ENCODE measurements at regions of chr12 and their contacts with region 1.

Region 1: DNA sequence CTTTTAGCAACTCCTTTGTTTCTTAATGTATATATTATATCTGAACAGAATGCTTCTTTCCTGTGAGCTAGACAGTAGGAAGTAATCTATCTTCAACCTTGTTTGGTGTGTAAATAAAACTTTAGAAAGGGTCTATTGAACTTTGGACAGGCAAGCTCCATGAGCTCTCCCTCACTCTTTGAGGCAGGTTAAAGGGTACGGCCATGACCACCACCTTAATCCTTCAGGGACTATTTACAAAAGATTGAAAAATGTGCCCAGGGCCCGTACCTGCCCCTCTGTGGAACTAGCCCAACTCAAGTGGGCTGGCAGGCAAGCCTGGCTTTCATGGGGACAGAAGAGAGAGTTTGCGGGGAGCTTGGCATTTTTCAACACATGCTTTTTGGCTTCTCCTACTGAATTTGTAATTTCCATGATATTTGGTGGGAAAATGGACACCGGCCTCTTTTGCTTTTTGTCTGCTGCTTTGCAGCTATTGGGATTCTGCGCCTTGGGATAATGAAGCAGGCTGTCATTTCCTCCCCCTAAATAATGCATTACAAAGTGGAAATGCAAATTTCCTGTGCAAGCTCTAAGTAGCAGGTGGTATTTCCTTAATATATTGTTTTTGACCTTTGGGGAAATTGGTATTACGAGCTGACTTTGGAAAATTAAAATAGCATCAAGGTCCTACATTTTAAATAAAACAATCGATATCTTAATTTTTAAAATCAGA is 106.0 kb downstream of the HMGA2 start:
- DNase-seq: no peak
- ATAC-seq: no peak
- H3K4me3 ChIP-seq: no peak overlapping the region
- H3K27ac ChIP-seq: no peak overlapping the region
- H3K4me1 ChIP-seq: peaks cover 9% of the 10 kb centered on the region; the same call in 1 of the 2 replicates
- H3K27me3 ChIP-seq: no peaks in the 10 kb centered on the region
- CTCF ChIP-seq: no peak
- EP300 ChIP-seq: no peak
- POLR2A ChIP-seq: no peak
- RAD21 ChIP-seq: no peak

Region 2: GRCh38 chr12:65756956-65757511 is 173.2 kb before region 1 on chr12:
- CTCF ChIA-PET with region 1: no interaction called
- POLR2A ChIA-PET with region 1: no interaction called
- RAD21 ChIA-PET with region 1: no interaction called
- SMC1A ChIA-PET with region 1: no interaction called
- in situ Hi-C with region 1: no loop called
- intact Hi-C with region 1: no loop called
- DNase-seq: peak; percentile 87
- ATAC-seq: peak; percentile 95
- H3K4me3 ChIP-seq: no peak overlapping the region
- H3K27ac ChIP-seq: peak overlapping the region; percentile 62
- H3K4me1 ChIP-seq: peaks cover 24% of the 10 kb centered on the region
- H3K27me3 ChIP-seq: no peaks in the 10 kb centered on the region; a peak in 1 of 4 replicates
- CTCF ChIP-seq: no peak
- EP300 ChIP-seq: peak; percentile 55 to 70; a peak in 3 of 4 replicates
- POLR2A ChIP-seq: no peak
- RAD21 ChIP-seq: 0 out of 2 replicates have a peak, but pooled peaks have one; percentile 21

Region 3: GRCh38 chr12:65918021-65918420 is 12.2 kb before region 1 on chr12:
- CTCF ChIA-PET with region 1: interaction called, 3 read pairs
- POLR2A ChIA-PET with region 1: no interaction called
- RAD21 ChIA-PET with region 1: interaction called, 4 read pairs
- SMC1A ChIA-PET with region 1: interaction called, 10 read pairs
- in situ Hi-C with region 1: no loop called
- intact Hi-C with region 1: no loop called
- DNase-seq: no peak
- ATAC-seq: peak; percentile 63
- H3K4me3 ChIP-seq: peak overlapping the region; percentile 15; the same call in 1 of the 2 replicates
- H3K27ac ChIP-seq: no peak overlapping the region
- H3K4me1 ChIP-seq: peaks cover 4% of the 10 kb centered on the region; the same call in 1 of the 2 replicates
- H3K27me3 ChIP-seq: no peaks in the 10 kb centered on the region
- CTCF ChIP-seq: no peak
- EP300 ChIP-seq: no peak
- POLR2A ChIP-seq: no peak
- RAD21 ChIP-seq: no peak

Region 4: DNA sequence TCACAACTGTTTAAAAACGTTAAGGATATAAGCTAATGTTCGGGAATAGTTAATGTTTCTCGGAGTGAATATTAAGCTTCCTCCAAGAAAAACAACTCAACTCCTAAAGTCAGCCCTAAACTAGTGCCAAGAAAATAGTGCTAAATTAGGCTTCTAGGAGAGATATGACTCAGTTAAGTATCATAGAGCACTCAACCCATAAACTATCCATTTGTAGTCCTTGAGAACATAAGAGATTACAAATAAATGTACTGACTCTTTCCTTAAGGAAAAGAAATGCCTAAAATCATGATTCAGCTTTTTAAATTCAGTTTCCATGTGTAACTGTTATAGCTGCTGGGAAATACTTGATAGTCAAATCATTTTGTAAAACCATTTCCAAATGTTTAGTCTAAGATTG is 11.1 kb after region 1 on chr12:
- CTCF ChIA-PET with region 1: interaction called, 5 read pairs
- POLR2A ChIA-PET with region 1: no interaction called
- RAD21 ChIA-PET with region 1: interaction called, 7 read pairs
- SMC1A ChIA-PET with region 1: interaction called, 19 read pairs
- in situ Hi-C with region 1: no loop called
- intact Hi-C with region 1: no loop called
- DNase-seq: no peak
- ATAC-seq: no peak
- H3K4me3 ChIP-seq: no peak overlapping the region
- H3K27ac ChIP-seq: no peak overlapping the region
- H3K4me1 ChIP-seq: no peaks in the 10 kb centered on the region
- H3K27me3 ChIP-seq: no peaks in the 10 kb centered on the region
- CTCF ChIP-seq: no peak
- EP300 ChIP-seq: no peak
- POLR2A ChIP-seq: no peak
- RAD21 ChIP-seq: no peak